Endothelial cell of umbilical vein (primary cell): ENCODE measurements at regions of chr18 and their contacts with region 1.

Region 1: GRCh38 chr18:47772374-47773248 is 157.8 kb downstream of the SMAD2 start:
- DNase-seq: peak; percentile 76
- H3K4me3 ChIP-seq: no peak overlapping the region
- H3K27ac ChIP-seq: no peak overlapping the region
- H3K4me1 ChIP-seq: no peaks in the 10 kb centered on the region
- H3K27me3 ChIP-seq: peaks cover 4% of the 10 kb centered on the region in 2 experiments
- CTCF ChIP-seq: peak; percentile 73 to 95
- POLR2A ChIP-seq: no peak

Region 2: DNA sequence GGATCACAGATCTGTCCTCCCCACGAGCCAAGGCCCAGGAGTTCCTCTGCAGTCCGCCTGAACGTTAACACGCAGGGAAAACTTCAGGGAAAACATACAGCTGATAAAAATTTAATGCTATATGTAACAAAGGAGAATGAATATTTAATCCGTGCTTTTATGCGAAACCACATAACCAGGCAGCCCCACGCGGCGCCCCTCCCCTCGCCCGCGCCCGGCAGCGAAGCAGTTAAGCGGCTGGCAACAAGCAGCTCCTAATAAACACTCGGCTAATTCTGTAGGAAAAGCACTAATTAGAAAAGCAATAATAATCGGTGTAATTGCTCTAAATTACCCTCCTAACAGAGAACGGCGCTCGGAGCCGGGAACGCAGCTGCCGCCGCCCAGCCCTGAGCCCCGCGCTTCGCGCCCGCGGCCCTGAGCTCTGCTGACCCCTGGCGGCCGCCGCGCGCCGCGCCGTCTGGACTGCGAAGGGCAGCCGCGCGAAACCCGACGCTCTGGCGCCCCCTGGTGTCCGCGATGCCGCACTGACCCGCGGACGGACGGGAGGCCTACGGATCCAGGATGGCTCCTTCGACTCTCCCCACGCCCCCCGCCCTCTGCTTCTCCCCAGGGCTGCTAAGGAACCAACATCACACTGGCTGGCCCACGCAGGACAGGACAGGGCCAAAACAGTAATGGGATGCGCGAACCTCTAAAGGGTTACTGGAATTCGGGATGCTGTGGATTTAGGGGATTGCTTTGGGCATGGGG is 23.6 kb before region 1 on chr18:
- CTCF ChIA-PET with region 1: interaction called, 10 read pairs
- POLR2A ChIA-PET with region 1: no interaction called
- dilution Hi-C with region 1: no loop called
- intact Hi-C with region 1: no loop called
- DNase-seq: peak; percentile 73
- H3K4me3 ChIP-seq: peak overlapping the region in 1 of 3 experiments; percentile 46
- H3K27ac ChIP-seq: no peak overlapping the region
- H3K4me1 ChIP-seq: no peaks in the 10 kb centered on the region
- H3K27me3 ChIP-seq: no peaks in the 10 kb centered on the region
- CTCF ChIP-seq: peak; percentile 94 to 100
- POLR2A ChIP-seq: no peak

Region 3: GRCh38 chr18:47930931-47931717 is 158.5 kb after region 1 on chr18:
- CTCF ChIA-PET with region 1: interaction called, 10 read pairs
- POLR2A ChIA-PET with region 1: no interaction called
- dilution Hi-C with region 1: no loop called
- intact Hi-C with region 1: loop called (anchors 2 kb)
- DNase-seq: peak; percentile 93
- H3K4me3 ChIP-seq: peak overlapping the region; percentile 34 to 99 (median 49)
- H3K27ac ChIP-seq: peak overlapping the region; percentile 94
- H3K4me1 ChIP-seq: peaks cover 18% of the 10 kb centered on the region
- H3K27me3 ChIP-seq: peaks cover 9 to 15% of the 10 kb centered on the region in 2 experiments
- CTCF ChIP-seq: no peak
- POLR2A ChIP-seq: no peak

Region 4: DNA sequence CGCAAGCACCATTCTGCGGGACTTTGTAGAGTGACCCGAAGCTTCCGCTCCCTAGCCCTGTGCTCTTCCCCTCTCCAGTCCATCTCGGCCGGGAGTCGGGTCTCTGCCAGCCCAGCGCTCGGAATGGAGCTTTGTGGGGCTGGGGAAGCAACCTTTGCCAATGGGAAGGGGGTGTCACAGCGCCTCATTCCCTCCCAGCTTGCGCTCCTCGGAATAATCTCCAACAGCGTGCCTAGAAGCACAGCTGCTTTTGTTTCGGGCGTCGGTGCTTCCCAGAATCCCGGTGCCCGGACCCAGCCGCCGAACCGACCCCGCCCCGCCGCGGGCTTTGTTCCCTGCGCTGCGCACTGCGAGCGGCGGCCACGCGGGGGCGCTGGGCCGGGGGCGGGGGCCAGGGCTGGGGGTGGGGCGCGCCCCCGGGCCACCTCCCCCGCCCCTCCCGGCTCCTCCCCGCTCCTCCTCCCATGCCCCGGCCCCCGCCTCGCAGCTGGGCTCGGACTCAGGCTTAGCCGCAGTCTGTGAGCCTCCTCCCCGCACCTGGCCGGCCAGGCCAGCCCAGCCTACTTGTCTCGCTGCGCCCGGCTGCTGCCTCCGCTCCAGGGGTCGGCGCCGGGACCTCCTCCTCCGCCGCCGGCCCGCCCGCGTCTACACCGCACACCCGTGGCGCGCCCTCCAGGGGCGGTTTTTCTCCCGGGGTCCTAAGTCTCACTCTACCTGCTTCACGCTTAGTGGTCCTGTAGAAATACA is 235.5 kb after region 1 on chr18:
- CTCF ChIA-PET with region 1: interaction called, 21 read pairs
- POLR2A ChIA-PET with region 1: no interaction called
- dilution Hi-C with region 1: no loop called
- intact Hi-C with region 1: no loop called
- DNase-seq: peak; percentile 51
- H3K4me3 ChIP-seq: peak overlapping the region; percentile 48 to 70 (median 62)
- H3K27ac ChIP-seq: peak overlapping the region; percentile 51
- H3K4me1 ChIP-seq: peaks cover 26% of the 10 kb centered on the region
- H3K27me3 ChIP-seq: peaks cover 3 to 7% of the 10 kb centered on the region in 2 experiments
- CTCF ChIP-seq: peak; percentile 31 to 53
- POLR2A ChIP-seq: peak; percentile 66

Region 5: DNA sequence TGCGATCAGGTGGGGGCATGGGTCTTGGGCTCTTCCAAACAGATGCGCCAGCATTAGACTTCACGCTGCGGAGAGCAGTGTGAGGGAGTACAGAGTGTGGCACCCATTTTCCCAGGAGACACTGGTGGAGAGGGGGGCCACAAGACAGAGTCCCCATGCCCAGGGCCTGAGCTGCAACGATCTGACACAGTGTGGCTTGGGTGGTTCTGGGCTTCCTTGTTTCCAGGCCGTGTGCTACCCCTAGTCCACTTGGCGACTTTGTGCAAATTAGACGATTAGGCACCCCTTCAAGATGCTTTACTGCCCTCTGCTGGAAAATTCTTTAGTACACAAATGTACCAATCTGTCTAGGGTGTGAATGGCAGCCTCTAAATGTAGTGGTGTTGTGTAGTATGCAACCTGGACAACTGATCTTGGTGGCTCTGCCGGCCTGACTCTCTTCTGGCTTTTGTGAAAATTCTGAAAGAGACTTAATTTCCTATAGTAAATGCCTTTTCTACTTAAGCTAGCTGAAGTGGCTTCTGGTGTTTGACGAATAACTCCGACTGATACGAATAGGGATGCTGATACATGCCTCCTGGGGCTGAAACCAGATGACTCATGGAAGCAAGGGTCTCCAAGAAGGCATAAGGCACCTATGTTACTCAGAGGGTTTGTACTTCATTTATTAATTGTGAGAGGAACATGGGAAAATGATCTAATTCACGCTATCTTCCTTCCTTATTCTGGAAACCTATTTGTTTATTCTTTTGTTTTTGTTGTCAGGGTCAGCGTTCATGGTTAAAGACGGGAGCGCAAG is 250.1 kb after region 1 on chr18:
- CTCF ChIA-PET with region 1: interaction called, 20 read pairs
- POLR2A ChIA-PET with region 1: no interaction called
- dilution Hi-C with region 1: no loop called
- intact Hi-C with region 1: loop called (anchors 1 kb)
- DNase-seq: peak; percentile 64
- H3K4me3 ChIP-seq: no peak overlapping the region
- H3K27ac ChIP-seq: no peak overlapping the region
- H3K4me1 ChIP-seq: peaks cover 10% of the 10 kb centered on the region
- H3K27me3 ChIP-seq: peaks cover 2 to 9% of the 10 kb centered on the region in 2 experiments
- CTCF ChIP-seq: peak; percentile 47 to 57
- POLR2A ChIP-seq: no peak

Region 6: DNA sequence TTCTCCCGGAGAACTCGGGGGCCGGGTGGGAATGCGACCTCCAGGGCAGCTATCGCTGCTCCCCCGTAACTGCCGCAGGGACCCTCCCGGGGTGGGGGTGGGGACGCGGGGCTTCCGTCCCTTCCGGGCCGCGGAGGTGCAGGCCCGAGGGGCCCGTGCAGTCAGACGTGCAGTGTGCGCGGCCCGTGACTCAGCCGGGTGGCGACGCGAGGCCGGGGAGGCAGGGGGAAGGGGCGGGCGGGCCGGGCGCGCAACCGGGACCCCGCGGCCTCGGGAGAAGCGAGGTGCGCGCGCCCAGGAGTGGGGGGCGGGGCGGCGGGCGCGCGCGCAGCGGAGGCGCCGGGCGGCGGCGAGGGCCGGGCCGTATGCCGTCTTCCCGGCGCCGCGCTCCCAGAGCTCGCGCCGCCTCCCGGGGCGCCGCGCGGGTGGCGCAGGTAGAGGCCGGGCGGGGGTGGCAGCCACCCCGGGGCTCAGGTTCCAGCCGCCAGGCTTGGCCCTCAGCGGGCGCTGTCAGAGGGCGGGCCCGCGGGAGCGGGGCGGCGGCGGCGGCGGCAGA is 1203.1 kb after region 1 on chr18:
- CTCF ChIA-PET with region 1: no interaction called
- POLR2A ChIA-PET with region 1: no interaction called
- dilution Hi-C with region 1: no loop called
- intact Hi-C with region 1: no loop called
- DNase-seq: peak; percentile 35
- H3K4me3 ChIP-seq: peak overlapping the region; percentile 45 to 74 (median 60)
- H3K27ac ChIP-seq: no peak overlapping the region
- H3K4me1 ChIP-seq: peaks cover 7% of the 10 kb centered on the region
- H3K27me3 ChIP-seq: no peaks in the 10 kb centered on the region
- CTCF ChIP-seq: no peak
- POLR2A ChIP-seq: no peak